ENCODE measurements at regions of chr2 and their contacts with region 1.

Region 1: DNA sequence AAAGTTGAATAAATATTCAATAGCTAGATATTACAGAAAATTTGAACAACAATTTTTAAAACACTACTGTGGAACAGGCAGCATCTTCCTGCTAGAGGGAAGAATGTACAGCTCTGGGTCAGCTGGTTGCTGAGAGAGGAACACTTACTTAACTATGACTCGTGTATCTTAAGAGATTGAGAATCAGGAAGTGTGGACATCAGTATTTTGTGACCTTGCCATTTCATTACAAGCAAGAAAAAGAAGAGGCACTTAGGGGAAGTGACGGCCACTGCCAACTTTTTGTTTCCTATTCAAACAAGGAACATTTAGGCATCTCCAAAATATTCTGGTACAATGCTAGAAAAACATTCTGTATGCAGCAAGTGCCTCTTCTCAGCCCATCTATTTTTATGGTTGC is 45.9 kb downstream of the ITPRID2 start:
- DNase-seq: no peak
- H3K4me3 Mint-ChIP-seq: no peak overlapping the region
- H3K27ac Mint-ChIP-seq: no peak overlapping the region
- H3K4me1 Mint-ChIP-seq: no peaks in the 10 kb centered on the region
- H3K27me3 Mint-ChIP-seq: peaks cover 18% of the 10 kb centered on the region

Region 2: GRCh38 chr2:181904022-181904632 is 33.3 kb before region 1 on chr2:
- intact Hi-C with region 1: no loop called
- DNase-seq: no peak
- H3K4me3 Mint-ChIP-seq: no peak overlapping the region
- H3K27ac Mint-ChIP-seq: no peak overlapping the region
- H3K4me1 Mint-ChIP-seq: peaks cover 21% of the 10 kb centered on the region
- H3K27me3 Mint-ChIP-seq: no peaks in the 10 kb centered on the region

Region 3: GRCh38 chr2:181953881-181954537 is 16.5 kb after region 1 on chr2:
- intact Hi-C with region 1: loop called (anchors 2 kb)
- DNase-seq: peak; percentile 38
- H3K4me3 Mint-ChIP-seq: peak overlapping the region; percentile 47
- H3K27ac Mint-ChIP-seq: no peak overlapping the region
- H3K4me1 Mint-ChIP-seq: peaks cover 21% of the 10 kb centered on the region
- H3K27me3 Mint-ChIP-seq: peaks cover 24% of the 10 kb centered on the region

Region 4: DNA sequence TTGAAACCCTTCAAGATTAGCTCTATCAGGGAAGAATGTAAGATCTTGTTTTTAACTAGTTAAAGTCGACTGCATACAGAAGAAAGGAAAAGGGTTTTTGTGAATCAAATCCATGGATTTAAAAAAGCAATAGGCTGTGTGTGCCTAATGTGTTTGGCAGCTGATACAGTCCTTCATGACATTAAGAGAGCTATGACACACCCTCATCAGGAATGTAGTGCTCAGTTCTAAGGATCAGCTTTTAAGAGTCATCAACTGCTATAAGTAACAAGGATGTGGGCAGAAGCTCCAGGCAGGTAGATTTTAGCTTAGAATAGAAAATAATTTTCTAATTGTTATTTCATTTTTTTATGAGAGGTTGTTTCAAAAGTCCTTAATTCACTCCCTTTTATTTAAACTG is 101.1 kb after region 1 on chr2:
- intact Hi-C with region 1: no loop called
- DNase-seq: no peak
- H3K4me3 Mint-ChIP-seq: no peak overlapping the region
- H3K27ac Mint-ChIP-seq: no peak overlapping the region
- H3K4me1 Mint-ChIP-seq: no peaks in the 10 kb centered on the region
- H3K27me3 Mint-ChIP-seq: no peaks in the 10 kb centered on the region

Measured in activated T-helper 1 cell treated with anti-CD3 and anti-CD28 coated beads, Interleukin-12 subunit alpha, Interleukin-12 subunit beta, Interleukin-2, Interleukin-4 antibody, amounts not matched to agents 30 ng/mL and 10 ng/mL and 1 ng/mL, durations not matched to agents 14 hours and 24 hours and 36 hours (primary cell).